ENCODE measurements at regions of chr1 and their contacts with region 1.

Region 1: GRCh38 chr1:54215523-54215922 is 15.6 kb downstream of the MRPL37 start:
- DNase-seq: no peak
- ATAC-seq: no peak
- H3K4me3 ChIP-seq: no peak overlapping the region
- H3K4me3 Mint-ChIP-seq: no peak overlapping the region
- H3K27ac ChIP-seq: no peak overlapping the region
- H3K27ac Mint-ChIP-seq: no peak overlapping the region
- H3K4me1 ChIP-seq: no peaks in the 10 kb centered on the region
- H3K4me1 Mint-ChIP-seq: no peaks in the 10 kb centered on the region
- H3K27me3 ChIP-seq: no peaks in the 10 kb centered on the region
- H3K27me3 Mint-ChIP-seq: no peaks in the 10 kb centered on the region
- CTCF ChIP-seq: no peak

Region 2: GRCh38 chr1:54121482-54122134 is 93.9 kb before region 1 on chr1:
- CTCF ChIA-PET with region 1: no interaction called
- POLR2A ChIA-PET with region 1: no interaction called
- intact Hi-C with region 1: no loop called
- DNase-seq: peak; percentile 51 to 79 (median 60)
- ATAC-seq: peak; percentile 85
- H3K4me3 ChIP-seq: peak overlapping the region; percentile 4
- H3K4me3 Mint-ChIP-seq: no peak overlapping the region
- H3K27ac ChIP-seq: no peak overlapping the region
- H3K27ac Mint-ChIP-seq: no peak overlapping the region
- H3K4me1 ChIP-seq: peaks cover 9% of the 10 kb centered on the region
- H3K4me1 Mint-ChIP-seq: no peaks in the 10 kb centered on the region
- H3K27me3 ChIP-seq: no peaks in the 10 kb centered on the region
- H3K27me3 Mint-ChIP-seq: peaks cover 3% of the 10 kb centered on the region
- CTCF ChIP-seq: peak; percentile 59

Region 3: DNA sequence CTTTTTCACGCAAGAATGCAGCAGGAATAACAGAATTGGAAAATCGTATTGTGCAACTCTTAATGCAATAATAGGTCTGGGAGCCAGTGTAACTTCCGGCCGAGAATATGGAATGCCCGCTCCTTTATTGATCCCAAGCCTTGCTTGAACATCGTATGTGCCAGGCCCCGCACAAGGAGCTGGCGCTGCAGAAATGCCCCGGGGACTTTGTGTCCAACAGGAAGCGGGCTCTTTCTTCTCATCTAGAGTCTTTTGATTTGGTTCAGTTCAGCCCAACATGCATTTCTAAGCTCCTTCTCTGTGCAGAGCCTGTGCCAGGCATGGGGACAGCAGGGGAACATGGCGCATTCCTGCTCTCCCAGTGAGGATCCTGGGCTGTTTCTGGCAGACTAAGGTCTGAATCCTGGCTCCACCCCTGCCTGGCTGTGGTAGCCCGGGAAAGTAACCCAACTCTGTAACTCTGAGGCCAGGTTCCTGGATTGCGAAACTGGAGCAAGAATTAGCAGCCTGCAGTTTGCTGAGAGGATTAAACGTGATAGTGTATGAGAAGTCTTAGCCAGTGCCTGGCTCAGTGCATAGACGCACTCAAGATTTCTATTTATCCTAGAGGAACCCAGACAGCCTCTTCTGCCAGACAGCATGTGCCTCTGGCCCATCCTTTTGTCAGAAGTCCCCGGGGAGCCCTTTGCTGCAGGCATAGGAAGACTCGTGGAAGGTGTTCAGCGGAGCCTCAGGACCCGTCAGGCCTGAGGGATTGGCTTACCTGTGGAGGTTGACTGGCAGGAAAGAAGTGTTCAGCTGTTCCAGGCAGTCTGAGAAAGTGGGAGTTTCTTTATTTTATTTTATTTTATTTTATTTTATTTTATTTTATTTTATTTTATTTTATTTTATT is 61.7 kb before region 1 on chr1:
- CTCF ChIA-PET with region 1: no interaction called
- POLR2A ChIA-PET with region 1: no interaction called
- intact Hi-C with region 1: no loop called
- DNase-seq: no peak
- ATAC-seq: no peak
- H3K4me3 ChIP-seq: no peak overlapping the region
- H3K4me3 Mint-ChIP-seq: no peak overlapping the region
- H3K27ac ChIP-seq: no peak overlapping the region
- H3K27ac Mint-ChIP-seq: no peak overlapping the region
- H3K4me1 ChIP-seq: no peaks in the 10 kb centered on the region
- H3K4me1 Mint-ChIP-seq: no peaks in the 10 kb centered on the region
- H3K27me3 ChIP-seq: no peaks in the 10 kb centered on the region
- H3K27me3 Mint-ChIP-seq: no peaks in the 10 kb centered on the region
- CTCF ChIP-seq: no peak

Region 4: GRCh38 chr1:54190526-54190925 is 25.0 kb before region 1 on chr1:
- CTCF ChIA-PET with region 1: no interaction called
- POLR2A ChIA-PET with region 1: no interaction called
- intact Hi-C with region 1: loop called in 1 of 2 experiments (anchors 2 kb)
- DNase-seq: no peak
- ATAC-seq: no peak
- H3K4me3 ChIP-seq: no peak overlapping the region
- H3K4me3 Mint-ChIP-seq: no peak overlapping the region
- H3K27ac ChIP-seq: no peak overlapping the region
- H3K27ac Mint-ChIP-seq: no peak overlapping the region
- H3K4me1 ChIP-seq: no peaks in the 10 kb centered on the region
- H3K4me1 Mint-ChIP-seq: no peaks in the 10 kb centered on the region
- H3K27me3 ChIP-seq: no peaks in the 10 kb centered on the region
- H3K27me3 Mint-ChIP-seq: no peaks in the 10 kb centered on the region
- CTCF ChIP-seq: no peak

Region 5: GRCh38 chr1:54681358-54681757 is 465.8 kb after region 1 on chr1:
- CTCF ChIA-PET with region 1: no interaction called
- POLR2A ChIA-PET with region 1: no interaction called
- intact Hi-C with region 1: no loop called
- DNase-seq: no peak
- ATAC-seq: no peak
- H3K4me3 ChIP-seq: no peak overlapping the region
- H3K4me3 Mint-ChIP-seq: no peak overlapping the region
- H3K27ac ChIP-seq: no peak overlapping the region
- H3K27ac Mint-ChIP-seq: no peak overlapping the region
- H3K4me1 ChIP-seq: no peaks in the 10 kb centered on the region
- H3K4me1 Mint-ChIP-seq: no peaks in the 10 kb centered on the region
- H3K27me3 ChIP-seq: no peaks in the 10 kb centered on the region
- H3K27me3 Mint-ChIP-seq: no peaks in the 10 kb centered on the region
- CTCF ChIP-seq: no peak

Region 6: DNA sequence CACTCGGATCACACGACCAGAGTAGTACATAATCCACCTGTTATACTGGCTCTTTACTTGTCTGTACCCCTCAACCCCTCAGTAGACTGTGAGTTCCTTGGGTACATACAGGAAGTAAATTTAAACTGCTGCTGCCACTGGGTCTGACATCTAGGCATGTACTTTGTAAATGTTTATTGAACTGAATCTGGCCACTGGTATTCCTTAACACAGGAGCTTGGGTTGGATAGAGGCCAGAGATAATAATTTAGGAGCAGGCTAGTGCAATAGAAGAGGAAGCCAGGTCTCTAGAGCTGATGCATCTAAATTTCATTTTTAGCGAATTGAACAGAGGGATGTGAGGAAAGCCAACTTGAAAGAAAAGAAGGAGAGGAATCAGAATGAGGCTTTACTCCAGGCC is 512.5 kb after region 1 on chr1:
- CTCF ChIA-PET with region 1: no interaction called
- POLR2A ChIA-PET with region 1: no interaction called
- intact Hi-C with region 1: no loop called
- DNase-seq: no peak
- ATAC-seq: no peak
- H3K4me3 ChIP-seq: no peak overlapping the region
- H3K4me3 Mint-ChIP-seq: no peak overlapping the region
- H3K27ac ChIP-seq: no peak overlapping the region
- H3K27ac Mint-ChIP-seq: no peak overlapping the region
- H3K4me1 ChIP-seq: no peaks in the 10 kb centered on the region
- H3K4me1 Mint-ChIP-seq: no peaks in the 10 kb centered on the region
- H3K27me3 ChIP-seq: no peaks in the 10 kb centered on the region
- H3K27me3 Mint-ChIP-seq: no peaks in the 10 kb centered on the region
- CTCF ChIP-seq: no peak

Measured in CD4-positive, alpha-beta T cell (primary cell).